Activated T-helper 1 cell treated with anti-CD3 and anti-CD28 coated beads, Interleukin-12 subunit alpha, Interleukin-12 subunit beta, Interleukin-2, Interleukin-4 antibody, amounts not matched to agents 30 ng/mL and 10 ng/mL and 1 ng/mL, durations not matched to agents 14 hours and 24 hours and 36 hours (primary cell): ENCODE measurements at regions of chr11 and their contacts with region 1.

Region 1: DNA sequence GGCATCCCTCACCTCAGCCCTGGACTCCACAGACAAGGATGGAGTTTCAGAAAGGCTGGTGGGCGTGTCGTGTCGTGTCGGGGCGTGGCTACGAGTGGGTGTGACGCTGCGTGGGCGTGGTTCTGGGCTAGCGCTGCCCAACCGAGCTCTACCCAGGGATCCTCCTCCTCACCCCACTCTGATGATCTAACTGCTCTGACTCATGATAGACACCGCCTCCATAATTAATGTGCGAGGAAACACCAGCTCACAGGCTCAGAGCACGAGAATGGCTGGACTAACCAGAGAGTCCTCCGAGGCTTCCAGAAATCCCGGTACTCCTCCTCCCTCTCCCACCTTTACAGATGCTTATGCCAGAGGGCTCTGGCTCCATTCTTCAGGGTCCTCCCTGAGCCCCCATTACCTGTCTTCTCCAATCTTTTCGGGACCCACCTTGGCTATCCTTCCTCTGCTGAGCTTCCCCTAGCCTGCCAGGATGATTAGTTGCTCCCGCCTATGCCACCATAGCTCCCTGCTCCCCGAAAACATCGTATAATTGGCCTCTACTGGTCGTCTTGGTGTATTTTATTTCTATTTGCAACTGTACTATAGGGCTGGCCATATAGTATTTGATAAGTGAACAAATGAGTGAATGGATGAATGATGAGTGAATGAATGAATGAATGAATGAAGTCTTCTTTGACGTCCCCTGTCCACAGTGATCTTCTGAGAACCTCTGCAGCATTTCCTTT is 21.8 kb downstream of the TMPRSS13 start:
- DNase-seq: peak; percentile 68
- H3K4me3 Mint-ChIP-seq: peak overlapping the region; percentile 68
- H3K27ac Mint-ChIP-seq: peak overlapping the region; percentile 67
- H3K4me1 Mint-ChIP-seq: peaks cover 12% of the 10 kb centered on the region
- H3K27me3 Mint-ChIP-seq: no peaks in the 10 kb centered on the region

Region 2: GRCh38 chr11:117875382-117876058 is 31.9 kb before region 1 on chr11:
- intact Hi-C with region 1: loop called (anchors 2 kb)
- DNase-seq: no peak
- H3K4me3 Mint-ChIP-seq: peak overlapping the region; percentile 81
- H3K27ac Mint-ChIP-seq: no peak overlapping the region
- H3K4me1 Mint-ChIP-seq: peaks cover 23% of the 10 kb centered on the region
- H3K27me3 Mint-ChIP-seq: peaks cover 65% of the 10 kb centered on the region